ENCODE measurements at regions of chr3 and their contacts with region 1.

Region 1: GRCh38 chr3:149129326-149130205 is at the start of gene HPS3:
- DNase-seq: peak; percentile 89
- H3K4me3 ChIP-seq: peak within 1 kb of the TSS; percentile 96
- H3K27ac ChIP-seq: peak within 1 kb of the TSS; percentile 78 to 84
- H3K4me1 ChIP-seq: no peaks in the 10 kb centered on the region
- H3K27me3 ChIP-seq: no peaks in the 10 kb centered on the region
- CTCF ChIP-seq: peak in 2 of 4 experiments; percentile 17 to 28
- POLR2A ChIP-seq: peak; percentile 98
- total RNA-seq, gene HPS3: 17.6 to 25.2 TPM

Region 2: DNA sequence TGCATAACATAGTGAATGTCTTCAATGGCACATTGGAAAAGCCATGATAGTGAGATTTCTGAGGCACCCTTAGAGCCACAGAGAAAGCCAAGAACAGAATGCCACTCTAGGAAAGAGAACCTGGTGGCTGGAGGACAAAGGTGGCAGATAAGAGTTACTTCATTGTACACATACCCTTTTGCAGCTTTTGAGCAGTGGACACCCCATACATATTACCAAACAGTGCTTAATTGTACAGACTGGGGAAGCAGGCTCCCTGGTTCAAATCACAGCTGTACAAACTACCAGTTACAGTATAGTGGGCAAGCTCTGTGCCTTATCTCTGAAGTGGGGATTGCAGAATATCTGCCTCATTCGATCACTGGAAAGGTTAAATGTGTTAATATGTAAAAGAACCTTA is 148.3 kb before region 1 on chr3:
- intact Hi-C with region 1: no loop called
- DNase-seq: no peak
- H3K4me3 ChIP-seq: no peak overlapping the region
- H3K27ac ChIP-seq: no peak overlapping the region
- H3K4me1 ChIP-seq: no peaks in the 10 kb centered on the region
- H3K27me3 ChIP-seq: no peaks in the 10 kb centered on the region
- CTCF ChIP-seq: no peak
- POLR2A ChIP-seq: no peak

Region 3: GRCh38 chr3:148991194-148992026 is 138.2 kb before region 1 on chr3 and contains the start of gene GYG1:
- intact Hi-C with region 1: loop called (anchors 10 kb)
- DNase-seq: peak; percentile 70
- H3K4me3 ChIP-seq: peak within 1 kb of the TSS; percentile 62 to 94
- H3K27ac ChIP-seq: peak within 1 kb of the TSS; percentile 87 to 93
- H3K4me1 ChIP-seq: no peaks in the 10 kb centered on the region
- H3K27me3 ChIP-seq: no peaks in the 10 kb centered on the region
- CTCF ChIP-seq: peak in 3 of 4 experiments; percentile 26 to 53 (median 39)
- POLR2A ChIP-seq: peak; percentile 59
- total RNA-seq, gene GYG1: 37.4 to 69.5 TPM

Region 4: DNA sequence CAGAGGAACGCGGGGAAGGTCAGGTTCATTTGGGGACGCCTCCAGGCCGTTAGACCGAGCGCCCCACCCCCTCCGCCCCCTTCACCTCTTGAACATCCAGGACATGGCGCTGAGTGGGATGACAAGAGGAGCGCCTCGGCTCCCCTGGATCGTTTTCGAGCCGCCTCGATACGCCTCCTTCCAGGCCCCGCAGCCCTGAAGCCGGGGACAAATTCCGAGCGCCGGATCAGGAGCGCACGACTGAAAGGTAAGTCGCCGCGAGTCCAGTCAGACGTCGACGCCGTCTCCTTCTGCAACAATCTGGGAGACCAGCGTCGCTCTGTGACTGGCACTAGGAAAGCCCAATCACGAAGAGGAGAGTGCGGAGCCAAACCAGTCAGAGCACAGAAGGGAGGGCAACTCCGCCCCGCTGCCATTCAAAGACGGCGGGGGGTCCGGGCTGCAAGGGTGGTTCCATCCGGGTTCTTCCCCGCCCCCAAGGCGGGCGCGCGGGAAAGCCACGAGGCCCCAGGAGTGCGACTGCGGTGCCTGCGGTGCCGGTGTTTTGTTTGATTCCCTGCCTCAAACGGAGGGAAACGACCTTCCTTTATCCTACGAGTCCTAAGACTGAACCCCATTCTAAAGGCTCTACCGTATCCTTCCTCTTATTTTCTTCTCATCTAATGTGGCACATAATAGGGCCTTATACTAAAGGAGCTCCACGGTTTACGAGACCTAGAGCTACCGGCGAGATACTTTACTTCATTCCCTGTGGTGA is 43.2 kb before region 1 on chr3 and contains the start of gene HLTF:
- intact Hi-C with region 1: loop called (anchors 5 kb)
- DNase-seq: peak; percentile 91
- H3K4me3 ChIP-seq: peak within 1 kb of the TSS; percentile 67 to 75
- H3K27ac ChIP-seq: peak within 1 kb of the TSS; percentile 73 to 77
- H3K4me1 ChIP-seq: no peaks in the 10 kb centered on the region
- H3K27me3 ChIP-seq: no peaks in the 10 kb centered on the region
- CTCF ChIP-seq: peak in 1 of 4 experiments; percentile 13
- POLR2A ChIP-seq: peak; percentile 48
- total RNA-seq, gene HLTF: 29.9 to 171 TPM

Region 5: GRCh38 chr3:149216193-149216869 is 86.8 kb after region 1 on chr3:
- intact Hi-C with region 1: no loop called
- DNase-seq: no peak
- H3K4me3 ChIP-seq: no peak overlapping the region
- H3K27ac ChIP-seq: no peak overlapping the region
- H3K4me1 ChIP-seq: no peaks in the 10 kb centered on the region
- H3K27me3 ChIP-seq: no peaks in the 10 kb centered on the region
- CTCF ChIP-seq: no peak
- POLR2A ChIP-seq: no peak